ENCODE measurements at regions of chr11 and their contacts with region 1.

Region 1: GRCh38 chr11:12235947-12236743 is 125.8 kb downstream of the MICAL2 start:
- DNase-seq: peak; percentile 72
- H3K4me3 Mint-ChIP-seq: no peak overlapping the region
- H3K27ac Mint-ChIP-seq: peak overlapping the region; percentile 72
- H3K4me1 Mint-ChIP-seq: peaks cover 19% of the 10 kb centered on the region
- H3K27me3 Mint-ChIP-seq: no peaks in the 10 kb centered on the region

Region 2: GRCh38 chr11:12087075-12088004 is 148.8 kb before region 1 on chr11:
- CTCF ChIA-PET with region 1: interaction called, 26 read pairs
- intact Hi-C with region 1: loop called (anchors 1 kb)
- DNase-seq: peak; percentile 37
- H3K4me3 Mint-ChIP-seq: no peak overlapping the region
- H3K27ac Mint-ChIP-seq: no peak overlapping the region
- H3K4me1 Mint-ChIP-seq: peaks cover 41% of the 10 kb centered on the region
- H3K27me3 Mint-ChIP-seq: no peaks in the 10 kb centered on the region

Region 3: DNA sequence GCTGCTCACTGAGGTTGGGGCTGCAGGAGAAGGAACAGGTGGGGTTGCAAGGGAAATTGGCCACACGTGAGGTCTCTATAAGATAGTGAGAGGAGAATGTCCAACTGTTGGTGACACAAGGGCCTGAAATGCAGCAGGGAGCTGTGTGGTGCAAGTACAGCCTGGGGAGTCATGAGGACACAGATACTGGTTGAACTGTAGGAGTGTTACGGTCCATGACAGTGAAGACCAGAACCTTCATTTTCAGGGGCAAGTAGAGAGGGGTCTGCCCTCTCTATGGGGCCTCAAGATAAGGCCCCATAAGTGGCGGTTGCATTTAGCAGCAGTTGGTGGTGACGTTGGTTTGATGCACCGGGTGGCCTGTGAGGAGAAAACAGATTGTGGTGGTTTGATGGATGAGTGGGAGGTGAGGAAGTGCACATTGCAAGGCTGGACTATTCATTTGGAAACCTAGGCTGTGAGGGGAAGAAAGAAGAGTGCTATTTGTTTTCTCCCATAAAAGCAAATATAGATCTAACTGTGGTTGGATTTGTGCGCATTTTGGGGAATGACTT is 86.4 kb before region 1 on chr11:
- CTCF ChIA-PET with region 1: interaction called, 12 read pairs
- intact Hi-C with region 1: no loop called
- DNase-seq: peak; percentile 80
- H3K4me3 Mint-ChIP-seq: peak overlapping the region; percentile 3
- H3K27ac Mint-ChIP-seq: peak overlapping the region; percentile 87
- H3K4me1 Mint-ChIP-seq: peaks cover 48% of the 10 kb centered on the region
- H3K27me3 Mint-ChIP-seq: no peaks in the 10 kb centered on the region

Region 4: GRCh38 chr11:12174477-12175143 is 61.5 kb before region 1 on chr11:
- CTCF ChIA-PET with region 1: interaction called, 3 read pairs
- intact Hi-C with region 1: loop called (anchors 1 kb)
- DNase-seq: no peak
- H3K4me3 Mint-ChIP-seq: peak overlapping the region; percentile 19
- H3K27ac Mint-ChIP-seq: peak overlapping the region; percentile 90
- H3K4me1 Mint-ChIP-seq: peaks cover 66% of the 10 kb centered on the region
- H3K27me3 Mint-ChIP-seq: no peaks in the 10 kb centered on the region

Region 5: DNA sequence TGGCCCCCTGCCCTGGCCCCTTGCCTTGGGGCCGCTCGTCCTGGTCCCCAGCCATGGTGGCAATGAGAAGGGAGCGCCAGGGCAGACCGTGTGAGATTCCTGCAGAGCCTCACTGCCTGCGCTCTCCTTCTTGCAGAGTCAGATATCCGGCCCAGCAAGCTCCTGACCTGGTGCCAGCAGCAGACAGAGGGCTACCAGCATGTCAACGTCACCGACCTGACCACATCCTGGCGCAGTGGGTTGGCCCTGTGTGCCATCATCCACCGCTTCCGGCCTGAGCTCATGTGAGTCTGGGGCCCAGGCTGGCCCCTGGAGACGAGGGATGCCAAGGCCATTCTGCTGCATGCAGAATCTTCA is 11.6 kb before region 1 on chr11:
- CTCF ChIA-PET with region 1: interaction called, 28 read pairs
- intact Hi-C with region 1: no loop called
- DNase-seq: peak; percentile 97
- H3K4me3 Mint-ChIP-seq: peak overlapping the region; percentile 64
- H3K27ac Mint-ChIP-seq: peak overlapping the region; percentile 82
- H3K4me1 Mint-ChIP-seq: peaks cover 31% of the 10 kb centered on the region
- H3K27me3 Mint-ChIP-seq: no peaks in the 10 kb centered on the region

Region 6: DNA sequence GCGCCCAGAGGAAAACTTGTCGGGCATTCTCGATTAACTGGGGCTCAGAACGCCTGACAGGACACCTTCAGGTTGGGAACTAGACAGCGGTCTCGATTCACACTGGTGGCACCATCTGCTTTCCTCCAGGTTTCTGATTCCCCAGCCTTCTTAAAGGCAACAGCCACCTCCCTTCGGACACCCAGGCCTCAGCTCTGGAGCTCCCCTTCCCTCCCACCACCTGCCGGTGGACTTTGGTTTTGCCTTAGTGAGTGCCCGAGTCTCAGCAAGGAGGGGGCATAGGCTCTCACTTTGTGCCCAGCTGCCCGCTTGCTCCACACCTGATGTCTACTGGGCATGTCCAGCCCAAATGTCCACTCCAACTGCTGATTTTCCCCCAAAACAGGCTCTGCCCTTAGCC is 30.8 kb after region 1 on chr11:
- CTCF ChIA-PET with region 1: no interaction called
- intact Hi-C with region 1: no loop called
- DNase-seq: no peak
- H3K4me3 Mint-ChIP-seq: no peak overlapping the region
- H3K27ac Mint-ChIP-seq: no peak overlapping the region
- H3K4me1 Mint-ChIP-seq: no peaks in the 10 kb centered on the region
- H3K27me3 Mint-ChIP-seq: no peaks in the 10 kb centered on the region

Region 7: DNA sequence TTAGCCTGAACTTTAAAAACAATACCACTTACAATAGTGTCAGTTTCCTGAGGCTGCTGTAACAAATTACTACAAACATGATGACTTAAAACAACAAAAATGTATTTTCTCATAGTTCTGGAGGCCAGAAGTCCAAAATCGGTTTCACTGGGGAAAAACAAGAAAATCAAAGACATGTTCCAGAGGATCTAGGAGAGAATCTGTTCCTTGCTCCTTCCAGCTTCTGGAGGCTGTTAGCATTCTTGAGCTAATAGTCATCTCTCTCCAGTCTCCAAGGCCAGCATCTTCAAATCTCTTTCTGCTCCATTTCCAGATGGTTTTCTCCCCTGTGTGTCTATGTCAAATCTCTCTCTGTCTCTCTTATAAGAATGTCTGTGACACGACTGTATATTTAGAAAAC is 370.5 kb after region 1 on chr11:
- CTCF ChIA-PET with region 1: no interaction called
- intact Hi-C with region 1: no loop called
- DNase-seq: no peak
- H3K4me3 Mint-ChIP-seq: no peak overlapping the region
- H3K27ac Mint-ChIP-seq: no peak overlapping the region
- H3K4me1 Mint-ChIP-seq: no peaks in the 10 kb centered on the region
- H3K27me3 Mint-ChIP-seq: peaks cover 15% of the 10 kb centered on the region

Measured in activated naive CD4-positive, alpha-beta T cell treated with anti-CD3 and anti-CD28 coated beads for 36 hours (primary cell).